AG04450 (cell line): ENCODE measurements at regions of chr4 and their contacts with region 1.

Region 1: GRCh38 chr4:105978684-105979296 is 83.5 kb downstream of the NPNT start:
- DNase-seq: no peak
- H3K4me3 ChIP-seq: no peak overlapping the region
- H3K27ac ChIP-seq: no peak overlapping the region
- H3K27me3 ChIP-seq: no peaks in the 10 kb centered on the region
- CTCF ChIP-seq: no peak

Region 2: GRCh38 chr4:105951198-105951597 is 27.6 kb before region 1 on chr4:
- CTCF ChIA-PET with region 1: no interaction called
- POLR2A ChIA-PET with region 1: no interaction called
- DNase-seq: no peak
- H3K4me3 ChIP-seq: no peak overlapping the region
- H3K27ac ChIP-seq: no peak overlapping the region
- H3K27me3 ChIP-seq: no peaks in the 10 kb centered on the region
- CTCF ChIP-seq: no peak

Region 3: GRCh38 chr4:107376293-107376692 is 1397.5 kb after region 1 on chr4:
- CTCF ChIA-PET with region 1: interaction called, 10 read pairs
- POLR2A ChIA-PET with region 1: no interaction called
- DNase-seq: no peak
- H3K4me3 ChIP-seq: no peak overlapping the region
- H3K27ac ChIP-seq: no peak overlapping the region
- H3K27me3 ChIP-seq: no peaks in the 10 kb centered on the region
- CTCF ChIP-seq: no peak